Activated CD4-positive, alpha-beta T cell treated with anti-CD3 and anti-CD28 coated beads for 36 hours (primary cell): ENCODE measurements at regions of chr12 and their contacts with region 1.

Region 1: DNA sequence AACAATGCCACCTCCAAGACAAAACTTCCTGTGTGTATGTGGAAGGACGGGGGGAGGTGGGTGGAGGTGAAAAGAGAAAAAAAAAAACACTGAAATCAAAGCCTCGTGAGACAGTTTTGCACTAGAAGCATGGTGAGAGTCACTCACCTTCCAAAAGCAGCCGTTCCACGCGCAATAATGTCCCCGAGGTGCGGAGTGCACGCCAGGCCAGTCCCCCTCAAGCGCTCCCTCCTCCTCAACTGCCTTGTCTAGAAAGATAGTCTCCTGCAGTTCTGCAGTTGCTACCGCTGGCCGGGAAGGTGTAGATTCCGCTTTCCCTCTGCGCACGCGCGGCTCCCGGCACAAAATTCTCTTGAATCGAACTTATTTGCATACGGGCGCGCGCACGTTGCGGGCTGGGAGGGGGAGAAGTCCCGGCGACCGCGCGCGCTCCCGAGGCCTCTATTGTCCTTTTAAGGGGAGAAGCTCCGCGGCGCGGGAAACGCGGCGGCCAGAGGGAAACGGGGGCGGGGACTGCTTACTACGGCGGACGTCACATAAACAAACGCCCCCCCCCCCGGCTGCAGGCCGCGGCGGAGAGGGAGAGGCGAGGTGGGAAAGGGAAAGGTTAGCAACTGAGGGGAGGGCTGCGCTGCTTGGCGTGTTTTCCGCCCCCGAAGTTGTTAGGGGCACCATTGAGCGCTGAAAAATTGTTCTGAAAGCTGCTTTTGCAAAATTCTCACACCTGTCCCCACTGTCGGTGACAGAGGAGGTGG is at the start of gene SINHCAF:
- DNase-seq: peak; percentile 100
- ATAC-seq: peak; percentile 72
- H3K4me3 Mint-ChIP-seq: peak within 1 kb of the TSS; percentile 100
- H3K27ac Mint-ChIP-seq: peak within 1 kb of the TSS; percentile 95
- H3K4me1 Mint-ChIP-seq: peaks cover 24% of the 10 kb centered on the region
- H3K27me3 Mint-ChIP-seq: no peaks in the 10 kb centered on the region
- total RNA-seq, gene SINHCAF: 187 to 211 TPM

Region 2: GRCh38 chr12:30695199-30696103 is 630.6 kb before region 1 on chr12 and contains the start of gene IPO8:
- CTCF ChIA-PET with region 1: no interaction called
- POLR2A ChIA-PET with region 1: no interaction called
- intact Hi-C with region 1: loop called in 1 of 2 experiments (anchors 10 kb)
- DNase-seq: peak; percentile 91
- ATAC-seq: peak; percentile 90
- H3K4me3 Mint-ChIP-seq: peak within 1 kb of the TSS; percentile 93
- H3K27ac Mint-ChIP-seq: peak within 1 kb of the TSS; percentile 95
- H3K4me1 Mint-ChIP-seq: peaks cover 37% of the 10 kb centered on the region
- H3K27me3 Mint-ChIP-seq: no peaks in the 10 kb centered on the region
- total RNA-seq, gene IPO8: 48.7 to 51.4 TPM

Region 3: DNA sequence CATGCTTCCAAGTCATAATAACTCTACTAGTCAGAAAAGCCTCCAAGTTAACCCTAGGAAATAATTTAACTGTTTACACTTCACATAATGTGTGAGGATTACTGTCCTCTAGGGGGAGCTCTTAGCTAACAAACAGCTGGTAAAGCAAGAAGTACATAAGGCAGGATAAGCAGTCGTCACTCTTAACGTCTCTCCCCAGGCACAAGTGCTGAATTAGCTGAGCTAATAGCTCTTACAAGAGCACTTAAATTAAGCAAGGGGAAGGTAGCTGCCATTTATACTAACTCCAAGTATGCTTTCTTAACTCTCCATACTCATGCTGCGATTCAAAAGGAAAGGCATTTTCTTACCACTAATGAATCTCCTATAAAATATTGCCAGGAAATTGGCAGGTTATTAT is 478.8 kb before region 1 on chr12:
- CTCF ChIA-PET with region 1: no interaction called
- POLR2A ChIA-PET with region 1: interaction called, 3 read pairs
- intact Hi-C with region 1: loop called in 1 of 2 experiments (anchors 5 kb)
- DNase-seq: peak; percentile 23
- ATAC-seq: peak; percentile 31
- H3K4me3 Mint-ChIP-seq: no peak overlapping the region
- H3K27ac Mint-ChIP-seq: no peak overlapping the region
- H3K4me1 Mint-ChIP-seq: peaks cover 9% of the 10 kb centered on the region
- H3K27me3 Mint-ChIP-seq: peaks cover 4% of the 10 kb centered on the region

Region 4: GRCh38 chr12:31589904-31590641 is 264.0 kb after region 1 on chr12:
- CTCF ChIA-PET with region 1: no interaction called
- POLR2A ChIA-PET with region 1: no interaction called
- intact Hi-C with region 1: loop called in 1 of 2 experiments (anchors 1 kb)
- DNase-seq: peak; percentile 43
- ATAC-seq: peak; percentile 42
- H3K4me3 Mint-ChIP-seq: peak overlapping the region; percentile 66
- H3K27ac Mint-ChIP-seq: no peak overlapping the region
- H3K4me1 Mint-ChIP-seq: peaks cover 7% of the 10 kb centered on the region
- H3K27me3 Mint-ChIP-seq: peaks cover 48% of the 10 kb centered on the region

Region 5: DNA sequence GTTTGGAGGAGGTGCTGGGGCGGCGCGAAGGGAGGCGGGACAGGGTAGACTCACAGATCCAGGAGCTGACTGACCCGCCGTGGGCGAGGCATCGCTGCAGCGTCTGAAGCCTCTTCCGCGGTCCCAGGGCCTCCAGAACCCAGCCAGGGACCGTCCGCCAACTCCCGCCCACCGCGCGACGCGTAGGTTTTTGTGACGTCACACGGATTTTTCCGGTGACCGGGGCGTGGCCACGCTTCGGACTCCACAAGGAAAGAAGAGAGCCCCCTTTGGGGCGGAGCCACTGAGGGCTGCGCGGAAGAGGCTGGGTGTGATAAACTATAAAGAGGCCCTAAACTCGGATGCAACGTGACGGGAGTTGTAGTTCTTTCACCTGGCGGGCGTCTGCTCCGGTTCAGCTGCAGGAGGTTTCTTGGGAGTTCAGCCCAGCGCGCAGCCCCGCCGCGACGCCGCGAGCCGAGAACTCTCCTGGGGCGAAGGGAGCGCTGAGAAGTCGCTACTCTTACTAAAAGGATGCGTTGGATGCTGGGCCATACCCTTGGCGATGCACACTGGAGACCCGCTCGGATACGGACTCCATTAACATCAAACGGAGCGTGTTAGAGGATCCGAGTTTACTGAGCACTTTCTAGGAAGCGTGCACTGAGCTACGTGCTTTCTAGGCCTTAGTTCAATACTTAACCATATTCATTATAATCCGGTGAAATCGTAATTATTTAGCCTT is 403.0 kb after region 1 on chr12 and contains the start of gene AMN1:
- CTCF ChIA-PET with region 1: interaction called, 3 read pairs
- POLR2A ChIA-PET with region 1: interaction called, 6 read pairs
- intact Hi-C with region 1: loop called (anchors 2 to 5 kb)
- DNase-seq: peak; percentile 99
- ATAC-seq: peak; percentile 92
- H3K4me3 Mint-ChIP-seq: peak within 1 kb of the TSS; percentile 89
- H3K27ac Mint-ChIP-seq: peak within 1 kb of the TSS; percentile 99
- H3K4me1 Mint-ChIP-seq: peaks cover 52% of the 10 kb centered on the region
- H3K27me3 Mint-ChIP-seq: no peaks in the 10 kb centered on the region
- total RNA-seq, gene AMN1: 5.1 to 5.8 TPM

Region 6: DNA sequence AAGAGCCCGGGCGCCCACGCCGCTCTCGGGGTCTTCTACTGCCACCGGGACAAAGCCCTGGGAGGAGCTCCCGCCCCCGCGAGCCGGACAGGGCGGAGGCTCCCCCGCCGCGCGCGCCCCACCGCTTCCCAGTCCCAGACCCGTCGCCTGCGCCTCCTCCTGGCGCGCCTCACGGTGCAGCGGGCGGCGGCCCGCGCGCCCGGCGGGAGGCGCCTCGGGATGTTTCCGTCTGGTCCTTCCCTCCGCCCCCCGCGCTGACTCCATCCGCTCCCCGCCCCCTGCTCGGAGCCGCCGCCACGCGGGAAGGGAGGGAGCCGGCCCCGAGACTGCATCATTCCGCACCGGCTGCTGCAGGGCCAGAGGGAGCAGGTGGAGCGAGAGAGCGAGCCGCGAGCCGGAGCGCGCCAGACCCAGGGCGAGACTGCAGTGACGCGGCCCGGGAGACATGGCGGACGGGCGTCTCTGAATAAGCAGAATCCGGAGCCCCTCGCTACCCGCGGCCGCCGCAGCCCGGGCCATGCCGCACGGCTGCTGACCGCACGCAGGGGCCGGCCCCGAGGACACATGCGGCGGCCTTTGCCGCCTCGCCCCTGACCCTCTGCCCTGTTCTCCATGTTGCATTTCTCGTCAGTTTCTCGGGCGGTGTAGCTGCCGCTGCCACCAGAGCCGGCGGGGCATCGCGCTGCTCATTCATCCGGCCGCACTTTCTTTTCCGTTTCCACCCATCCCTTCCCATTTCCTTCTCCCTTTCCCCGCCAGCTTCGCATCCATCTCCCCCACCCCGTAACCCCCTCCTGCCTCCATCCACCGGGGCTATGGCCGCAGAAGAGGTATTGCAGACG is 780.7 kb after region 1 on chr12 and contains the start of gene BICD1:
- CTCF ChIA-PET with region 1: no interaction called
- POLR2A ChIA-PET with region 1: no interaction called
- intact Hi-C with region 1: loop called in 1 of 2 experiments (anchors 2 kb)
- DNase-seq: peak; percentile 86
- ATAC-seq: peak; percentile 83
- H3K4me3 Mint-ChIP-seq: peak within 1 kb of the TSS; percentile 83
- H3K27ac Mint-ChIP-seq: peak within 1 kb of the TSS; percentile 92
- H3K4me1 Mint-ChIP-seq: peaks cover 20% of the 10 kb centered on the region
- H3K27me3 Mint-ChIP-seq: peaks cover 2% of the 10 kb centered on the region
- total RNA-seq, gene BICD1: 12.7 to 15.1 TPM

Region 7: DNA sequence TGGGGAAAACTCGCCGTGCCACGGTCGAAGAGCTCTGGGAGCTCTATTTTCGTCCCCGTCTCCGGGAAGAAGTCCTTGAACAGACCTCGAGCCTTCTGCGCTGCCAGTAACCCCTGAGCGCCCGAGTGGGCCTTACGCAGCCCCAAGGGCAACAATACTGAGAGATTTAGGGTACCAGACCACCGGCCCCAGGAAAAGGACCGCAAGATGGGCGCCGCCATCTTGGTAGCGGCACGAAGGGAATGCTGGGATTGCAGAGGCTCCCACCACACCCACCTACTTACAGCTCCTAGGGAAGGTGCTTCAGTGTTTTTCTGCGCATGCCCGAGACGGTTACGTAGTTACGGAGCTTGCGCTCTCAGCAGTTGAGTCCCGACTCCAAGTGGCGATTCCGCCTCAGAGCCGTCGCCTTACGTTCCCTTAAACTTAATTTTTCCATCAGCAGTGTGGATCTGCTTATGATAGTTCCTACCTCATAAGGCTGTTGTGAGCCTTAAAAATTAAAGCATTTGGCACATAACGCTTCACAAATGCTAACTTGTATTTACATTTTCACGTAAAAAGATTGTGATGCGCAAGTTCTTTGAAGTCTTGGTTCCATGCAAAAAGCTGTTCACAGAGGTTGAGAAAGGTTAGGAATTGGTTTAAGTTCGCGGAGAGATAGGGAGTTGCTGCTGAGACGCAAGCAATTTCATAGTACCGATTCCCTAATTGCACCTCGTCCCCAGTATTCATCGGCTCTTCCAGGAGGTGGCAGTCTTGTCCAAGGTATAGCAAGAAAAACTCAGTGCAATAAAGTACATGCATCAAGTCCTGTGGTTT is 1429.8 kb after region 1 on chr12 and contains the start of gene YARS2:
- CTCF ChIA-PET with region 1: no interaction called
- POLR2A ChIA-PET with region 1: no interaction called
- intact Hi-C with region 1: loop called in 1 of 2 experiments (anchors 5 kb)
- DNase-seq: peak; percentile 92
- ATAC-seq: peak; percentile 92
- H3K4me3 Mint-ChIP-seq: peak within 1 kb of the TSS; percentile 88
- H3K27ac Mint-ChIP-seq: peak within 1 kb of the TSS; percentile 95
- H3K4me1 Mint-ChIP-seq: peaks cover 20% of the 10 kb centered on the region
- H3K27me3 Mint-ChIP-seq: no peaks in the 10 kb centered on the region
- total RNA-seq, gene YARS2: 33.0 to 45.9 TPM